CD14-positive monocyte (primary cell): ENCODE measurements at regions of chr17 and their contacts with region 1.

Region 1: GRCh38 chr17:48101012-48101720 is at the start of gene CBX1:
- DNase-seq: peak; percentile 79 to 86 (median 83)
- H3K4me3 ChIP-seq: peak within 1 kb of the TSS; percentile 62 to 86 (median 72)
- H3K4me3 Mint-ChIP-seq: peak within 1 kb of the TSS; percentile 89 to 94
- H3K27ac ChIP-seq: peak within 1 kb of the TSS; percentile 39 to 61
- H3K27ac Mint-ChIP-seq: peak within 1 kb of the TSS; percentile 64 to 87 (median 85)
- H3K4me1 ChIP-seq: peaks cover 35 to 46% of the 10 kb centered on the region in 2 donors
- H3K4me1 Mint-ChIP-seq: peaks cover 41% of the 10 kb centered on the region
- H3K27me3 ChIP-seq: no peaks in the 10 kb centered on the region
- H3K27me3 Mint-ChIP-seq: peaks cover 0 to 6% (median 0%) of the 10 kb centered on the region in 3 donors
- CTCF ChIP-seq: no peak
- polyA plus RNA-seq, gene CBX1: 12.5 to 18.2 (median 17.2) TPM

Region 2: DNA sequence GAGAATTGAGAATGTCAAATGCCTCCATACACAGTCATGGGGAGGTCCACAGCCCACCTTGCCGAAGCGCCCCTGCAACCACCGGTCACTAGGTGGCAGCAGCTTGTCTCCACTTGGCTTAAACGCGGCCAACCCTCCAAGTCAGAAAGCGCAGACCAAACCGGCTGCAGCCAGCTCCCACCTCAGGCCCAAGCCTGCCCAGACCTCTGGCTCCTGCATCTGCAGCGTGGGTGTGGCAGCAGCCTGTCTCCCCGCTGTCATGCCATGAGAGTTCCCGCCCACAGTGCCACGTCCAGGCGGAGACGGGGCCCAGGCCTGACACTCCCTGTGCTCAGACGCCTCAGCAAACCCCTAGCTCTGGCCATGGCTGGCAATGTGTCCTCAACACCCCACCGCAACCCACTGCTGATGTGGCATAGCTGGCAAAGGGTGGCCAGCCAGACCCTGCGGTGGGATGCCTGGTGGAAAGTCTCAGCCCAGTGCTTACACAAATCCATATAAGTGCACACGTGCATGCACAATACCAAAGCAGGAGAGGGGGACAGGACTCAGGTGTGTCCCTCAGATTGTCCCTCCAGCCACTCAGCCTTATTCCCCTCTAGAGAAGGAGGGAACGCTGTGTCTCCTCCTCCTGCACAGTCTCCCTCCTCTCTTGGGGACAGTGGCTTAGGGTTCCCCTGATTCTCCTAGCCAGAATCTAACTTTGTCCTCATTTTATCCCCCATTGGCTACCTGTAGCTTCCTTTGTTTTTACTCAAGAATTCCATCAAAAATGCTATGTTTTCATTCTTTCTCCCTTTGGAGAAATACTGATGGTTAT is 74.5 kb before region 1 on chr17:
- intact Hi-C with region 1: no loop called
- DNase-seq: peak; percentile 52 to 65 (median 65)
- H3K4me3 ChIP-seq: no peak overlapping the region
- H3K4me3 Mint-ChIP-seq: peak overlapping the region in 1 of 2 donors; percentile 97
- H3K27ac ChIP-seq: no peak overlapping the region
- H3K27ac Mint-ChIP-seq: no peak overlapping the region
- H3K4me1 ChIP-seq: peaks cover 46 to 51% of the 10 kb centered on the region in 2 donors
- H3K4me1 Mint-ChIP-seq: peaks cover 45% of the 10 kb centered on the region
- H3K27me3 ChIP-seq: no peaks in the 10 kb centered on the region
- H3K27me3 Mint-ChIP-seq: peaks cover 7 to 21% (median 18%) of the 10 kb centered on the region in 3 donors
- CTCF ChIP-seq: peak; percentile 82

Region 3: DNA sequence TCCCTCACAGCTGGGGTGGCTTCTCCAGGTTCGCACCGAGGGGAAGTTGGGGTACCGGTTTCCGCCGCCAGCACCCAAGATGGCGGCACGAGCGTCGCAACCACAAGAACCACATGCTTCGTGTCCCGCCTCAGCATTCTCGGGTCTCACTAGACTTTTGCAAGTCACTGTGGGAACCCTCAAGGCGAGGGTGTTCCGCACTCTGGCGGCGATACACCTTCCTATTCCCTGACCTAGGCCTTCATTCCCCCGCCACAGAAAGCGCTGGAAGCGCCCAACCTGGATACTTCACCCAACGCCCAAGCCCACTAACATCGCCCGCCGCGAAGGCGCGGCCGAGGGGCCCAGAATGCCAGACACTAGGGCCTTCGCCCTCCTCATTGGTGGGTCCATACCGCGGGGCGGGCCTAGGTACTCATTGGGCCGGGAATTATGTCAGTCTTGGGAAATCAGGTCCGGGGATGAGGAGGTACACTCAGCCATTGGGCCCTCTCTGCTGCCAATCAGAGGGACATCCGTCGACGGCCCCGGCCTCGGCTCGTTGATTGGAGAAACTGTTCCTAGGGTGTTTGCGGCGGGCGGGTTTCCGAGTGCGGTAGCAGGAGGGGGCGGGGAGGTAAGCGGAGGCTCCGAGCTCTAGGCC is 53.3 kb before region 1 on chr17 and contains the start of gene NFE2L1:
- intact Hi-C with region 1: loop called in 1 of 2 experiments (anchors 5 kb)
- DNase-seq: peak; percentile 98 to 99 (median 99)
- H3K4me3 ChIP-seq: peak within 1 kb of the TSS; percentile 56 to 89 (median 72)
- H3K4me3 Mint-ChIP-seq: peak within 1 kb of the TSS; percentile 93 to 97
- H3K27ac ChIP-seq: peak within 1 kb of the TSS; percentile 86 to 97
- H3K27ac Mint-ChIP-seq: peak within 1 kb of the TSS; percentile 96 to 100 (median 100)
- H3K4me1 ChIP-seq: peaks cover 37 to 56% of the 10 kb centered on the region in 2 donors
- H3K4me1 Mint-ChIP-seq: peaks cover 60% of the 10 kb centered on the region
- H3K27me3 ChIP-seq: no peaks in the 10 kb centered on the region
- H3K27me3 Mint-ChIP-seq: peaks cover 2 to 7% (median 5%) of the 10 kb centered on the region in 3 donors
- CTCF ChIP-seq: no peak
- polyA plus RNA-seq, gene NFE2L1: 2.8 to 27.0 (median 7.1) TPM

Region 4: GRCh38 chr17:48352630-48353029 is 251.5 kb after region 1 on chr17:
- intact Hi-C with region 1: no loop called
- DNase-seq: no peak
- H3K4me3 ChIP-seq: no peak overlapping the region
- H3K4me3 Mint-ChIP-seq: no peak overlapping the region
- H3K27ac ChIP-seq: no peak overlapping the region
- H3K27ac Mint-ChIP-seq: no peak overlapping the region
- H3K4me1 ChIP-seq: no peaks in the 10 kb centered on the region
- H3K4me1 Mint-ChIP-seq: no peaks in the 10 kb centered on the region
- H3K27me3 ChIP-seq: peaks cover 8 to 27% of the 10 kb centered on the region in 2 donors
- H3K27me3 Mint-ChIP-seq: peaks cover 13 to 32% (median 19%) of the 10 kb centered on the region in 3 donors
- CTCF ChIP-seq: no peak

Region 5: GRCh38 chr17:48704361-48705248 is 603.4 kb after region 1 on chr17:
- intact Hi-C with region 1: no loop called
- DNase-seq: no peak
- H3K4me3 ChIP-seq: no peak overlapping the region
- H3K4me3 Mint-ChIP-seq: peak overlapping the region in 1 of 2 donors; percentile 49
- H3K27ac ChIP-seq: no peak overlapping the region
- H3K27ac Mint-ChIP-seq: no peak overlapping the region
- H3K4me1 ChIP-seq: no peaks in the 10 kb centered on the region
- H3K4me1 Mint-ChIP-seq: no peaks in the 10 kb centered on the region
- H3K27me3 ChIP-seq: peaks cover 33 to 75% of the 10 kb centered on the region in 2 donors
- H3K27me3 Mint-ChIP-seq: peaks cover 47 to 82% (median 64%) of the 10 kb centered on the region in 3 donors
- CTCF ChIP-seq: no peak